Activated CD4-positive, alpha-beta T cell treated with anti-CD3 and anti-CD28 coated beads, Interleukin-2, amount 10 ng/mL, durations not matched to agents 24 days and 14 days (primary cell): ENCODE measurements at regions of chr3 and their contacts with region 1.

Region 1: DNA sequence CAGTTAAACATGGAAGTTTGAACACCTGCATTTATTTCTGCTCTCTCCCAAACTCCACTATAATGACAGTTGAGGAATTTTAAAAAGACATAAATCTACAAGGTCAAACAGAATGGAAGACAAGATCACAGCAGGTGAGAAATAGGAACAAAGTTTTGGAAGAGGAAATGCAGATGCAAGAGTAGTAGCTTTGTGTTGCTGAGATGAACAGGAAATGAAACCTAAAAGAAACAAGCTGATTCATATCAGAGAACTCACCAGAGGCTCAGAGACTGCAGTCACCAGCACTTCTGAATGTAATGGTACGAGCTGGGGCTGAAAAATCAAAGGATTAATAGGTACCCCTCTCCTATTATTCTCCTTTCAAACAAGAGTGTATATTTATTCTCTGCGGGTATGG is 459.9 kb downstream of the RAP2B start:
- DNase-seq: peak; percentile 74
- H3K4me3 Mint-ChIP-seq: peak overlapping the region; percentile 66
- H3K27ac Mint-ChIP-seq: peak overlapping the region; percentile 77
- H3K4me1 Mint-ChIP-seq: peaks cover 47% of the 10 kb centered on the region
- H3K27me3 Mint-ChIP-seq: no peaks in the 10 kb centered on the region

Region 2: DNA sequence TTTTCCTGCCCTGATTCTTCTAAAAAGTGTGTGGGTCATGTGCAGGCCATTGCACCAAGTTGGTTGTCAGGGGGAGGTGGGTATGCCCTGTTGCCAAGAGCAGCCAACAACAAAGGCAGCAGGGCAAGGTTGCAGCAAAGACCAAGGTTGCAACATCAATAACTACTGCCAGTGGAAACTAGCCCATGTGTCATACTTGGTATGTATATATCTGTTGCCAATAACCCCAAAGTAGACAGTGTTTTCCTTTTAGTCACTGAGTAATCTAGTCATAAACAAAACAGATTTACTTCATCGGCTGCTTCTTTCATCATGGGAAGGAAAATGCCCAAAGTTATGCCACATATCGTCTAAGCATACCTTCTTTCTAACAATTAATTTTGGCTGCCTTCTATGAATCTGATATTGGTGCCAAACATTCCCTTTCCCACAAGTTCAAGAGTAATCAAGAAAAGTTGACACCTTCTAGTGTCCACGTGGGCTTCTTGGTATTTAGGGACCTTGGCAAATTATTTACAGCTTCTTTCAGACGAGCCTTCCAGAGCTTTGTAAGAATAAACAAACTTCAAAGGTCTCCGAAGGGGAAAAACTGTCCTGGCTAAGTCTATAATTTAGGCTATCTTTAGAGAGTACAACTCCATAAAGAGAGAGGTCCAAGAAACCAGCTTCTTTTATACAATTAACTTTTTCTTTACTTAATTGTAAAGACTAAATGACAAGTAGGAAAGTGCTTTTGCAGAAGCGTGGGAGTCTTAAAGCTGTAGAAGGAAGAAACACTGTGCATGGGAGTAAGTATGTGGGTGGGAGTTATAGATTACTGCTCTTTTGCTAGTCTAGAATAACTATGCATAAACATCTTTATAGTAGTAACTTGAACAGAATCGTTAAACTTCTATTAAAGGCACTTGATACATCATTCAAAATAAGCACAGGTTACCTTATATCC is 1363.2 kb before region 1 on chr3:
- intact Hi-C with region 1: loop called (anchors 2 kb)
- DNase-seq: peak; percentile 89
- H3K4me3 Mint-ChIP-seq: peak overlapping the region; percentile 79
- H3K27ac Mint-ChIP-seq: peak overlapping the region; percentile 97
- H3K4me1 Mint-ChIP-seq: peaks cover 75% of the 10 kb centered on the region
- H3K27me3 Mint-ChIP-seq: no peaks in the 10 kb centered on the region

Region 3: GRCh38 chr3:153285194-153285641 is 336.7 kb before region 1 on chr3:
- intact Hi-C with region 1: loop called (anchors 5 kb)
- DNase-seq: no peak
- H3K4me3 Mint-ChIP-seq: no peak overlapping the region
- H3K27ac Mint-ChIP-seq: no peak overlapping the region
- H3K4me1 Mint-ChIP-seq: peaks cover 36% of the 10 kb centered on the region
- H3K27me3 Mint-ChIP-seq: no peaks in the 10 kb centered on the region

Region 4: GRCh38 chr3:153552887-153553598 is 68.9 kb before region 1 on chr3:
- intact Hi-C with region 1: loop called (anchors 2 kb)
- DNase-seq: no peak
- H3K4me3 Mint-ChIP-seq: no peak overlapping the region
- H3K27ac Mint-ChIP-seq: no peak overlapping the region
- H3K4me1 Mint-ChIP-seq: peaks cover 4% of the 10 kb centered on the region
- H3K27me3 Mint-ChIP-seq: no peaks in the 10 kb centered on the region

Region 5: DNA sequence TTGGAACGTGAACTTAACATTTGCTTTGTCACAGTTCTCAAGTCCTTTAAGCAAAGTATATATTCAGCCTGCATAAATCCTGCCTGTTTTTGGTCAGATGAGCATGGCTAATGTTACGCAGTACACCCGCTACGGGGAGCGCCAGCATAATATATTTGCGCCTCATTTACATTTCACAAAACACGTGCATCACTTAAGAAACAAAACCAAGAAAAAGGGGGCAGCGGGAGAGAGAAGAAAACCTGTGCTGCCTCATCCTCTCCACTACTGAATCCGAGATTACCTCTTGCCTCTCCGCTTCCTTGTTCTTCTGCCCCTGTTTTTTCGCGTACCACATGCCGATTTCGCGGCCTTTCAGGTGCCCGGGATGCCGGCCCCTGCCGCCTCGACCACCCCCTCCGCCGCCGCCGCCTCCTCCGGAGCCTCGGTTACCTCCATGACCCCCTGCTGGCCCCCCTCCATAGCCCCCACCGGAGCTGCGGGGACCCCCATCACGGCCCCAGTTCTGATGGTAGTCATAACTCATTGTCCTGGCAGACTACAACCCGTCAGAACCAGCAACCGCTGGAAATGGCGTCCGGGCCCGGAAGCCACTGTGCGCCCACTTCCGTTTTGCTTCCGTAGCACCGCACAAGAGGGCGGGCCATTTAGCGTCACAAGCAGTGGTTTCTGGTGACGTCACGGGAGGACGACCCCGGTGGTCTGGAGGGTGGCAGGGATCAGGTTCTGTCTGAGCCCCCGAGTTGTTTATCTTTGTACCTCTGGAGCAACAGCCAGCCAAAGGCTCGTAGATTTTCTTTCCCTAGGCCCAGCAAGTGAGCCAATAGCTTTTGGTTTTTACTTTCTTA is 702.2 kb after region 1 on chr3 and contains the start of gene DHX36:
- intact Hi-C with region 1: loop called (anchors 5 kb)
- DNase-seq: peak; percentile 96
- H3K4me3 Mint-ChIP-seq: peak within 1 kb of the TSS; percentile 92
- H3K27ac Mint-ChIP-seq: peak within 1 kb of the TSS; percentile 98
- H3K4me1 Mint-ChIP-seq: peaks cover 26% of the 10 kb centered on the region
- H3K27me3 Mint-ChIP-seq: peaks cover 4% of the 10 kb centered on the region
- total RNA-seq, gene DHX36: 92.5 and 93.3 TPM in 2 replicates